ENCODE measurements at regions of chr6 and their contacts with region 1.

Region 1: DNA sequence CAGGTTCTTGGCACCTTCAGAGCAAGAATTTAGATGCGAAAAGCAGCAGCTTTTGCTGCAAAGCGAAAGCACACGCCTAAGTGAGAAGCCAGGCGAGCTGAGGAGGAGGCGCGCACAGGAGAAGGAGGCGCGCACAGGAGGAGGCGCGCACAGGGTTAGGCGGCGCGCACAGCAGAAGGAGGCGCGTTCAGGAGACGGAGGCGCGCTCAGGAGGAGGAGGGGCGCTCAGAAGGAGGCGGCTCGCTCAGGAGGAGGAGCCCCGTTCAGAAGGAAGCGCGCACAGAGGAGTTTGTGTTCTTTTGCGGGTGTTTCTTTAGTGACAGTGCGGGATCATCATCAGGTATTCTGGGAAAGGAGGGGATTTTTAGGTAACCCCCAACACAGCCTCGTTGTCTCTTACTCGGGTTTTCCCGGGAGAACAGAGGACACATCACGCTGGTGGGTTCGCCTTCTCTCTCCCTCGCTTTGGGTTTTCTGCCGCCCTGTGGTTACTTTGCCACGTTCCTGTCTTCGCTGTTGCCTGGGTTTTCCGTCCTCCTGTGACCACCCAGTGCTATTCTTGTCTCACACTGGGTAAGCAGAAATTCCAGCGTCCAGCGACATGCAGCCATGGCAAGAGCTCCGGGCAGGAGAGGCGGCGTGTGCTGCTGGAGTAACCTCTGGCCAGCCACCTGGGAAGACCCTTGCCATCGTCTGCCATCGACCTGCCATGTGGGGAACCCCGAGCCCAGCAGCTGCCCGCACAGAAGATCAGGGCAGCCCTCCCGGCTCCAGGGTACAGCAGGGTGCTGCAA is 47.0 kb downstream of the WDR27 start:
- DNase-seq: peak; percentile 83
- ATAC-seq: peak; percentile 95
- H3K4me3 Mint-ChIP-seq: peak overlapping the region; percentile 74
- H3K27ac Mint-ChIP-seq: peak overlapping the region; percentile 75
- H3K4me1 Mint-ChIP-seq: peaks cover 7% of the 10 kb centered on the region
- H3K27me3 Mint-ChIP-seq: no peaks in the 10 kb centered on the region

Region 2: DNA sequence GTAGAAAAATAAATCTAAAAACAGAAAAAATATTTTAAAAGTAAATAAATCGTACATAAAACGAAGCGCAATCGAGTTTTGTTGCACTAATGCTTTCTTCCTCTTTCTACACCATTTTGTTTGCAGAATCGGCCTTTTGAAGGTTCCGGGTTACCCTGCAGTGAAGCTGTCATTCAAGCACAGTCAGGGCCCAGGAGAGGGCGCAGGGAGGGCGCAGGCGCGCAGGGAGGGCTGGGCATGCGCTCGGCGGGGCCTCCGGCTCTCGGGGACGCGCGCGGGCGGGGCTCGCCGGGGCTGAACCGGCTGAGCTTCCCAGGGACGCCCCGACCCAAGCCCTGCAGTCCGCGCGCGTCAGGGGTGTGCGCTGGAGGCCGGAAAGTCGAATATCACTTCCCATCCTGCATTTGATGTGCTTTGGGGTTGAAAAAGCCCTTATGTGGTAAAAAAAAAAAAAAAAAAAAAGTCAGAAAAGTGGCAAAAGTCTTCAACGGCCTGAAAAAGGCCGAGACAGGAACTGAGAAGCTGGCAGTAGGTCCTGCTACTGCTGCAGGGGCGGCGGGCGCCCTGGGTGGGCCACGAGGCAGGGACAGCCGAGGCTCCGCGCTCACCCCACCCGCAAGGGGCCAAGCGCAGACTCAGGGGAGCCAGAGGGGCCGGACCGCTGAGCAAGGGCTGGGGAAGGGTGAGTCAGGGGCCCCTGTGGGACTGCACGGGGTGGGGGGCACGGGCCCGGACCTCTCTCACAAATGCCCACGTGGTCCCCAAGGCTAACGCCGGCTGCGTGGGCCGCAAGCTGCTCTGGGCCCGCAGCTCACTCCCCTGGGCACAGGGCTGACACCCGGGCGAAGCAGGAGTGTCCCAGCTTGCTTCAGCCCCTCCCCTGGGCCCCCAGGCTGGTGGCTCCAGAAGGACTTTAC is 441.6 kb before region 1 on chr6:
- CTCF ChIA-PET with region 1: no interaction called
- POLR2A ChIA-PET with region 1: no interaction called
- intact Hi-C with region 1: loop called in 1 of 2 experiments (anchors 2 kb)
- DNase-seq: peak; percentile 95
- ATAC-seq: peak; percentile 100
- H3K4me3 Mint-ChIP-seq: peak overlapping the region; percentile 54
- H3K27ac Mint-ChIP-seq: peak overlapping the region; percentile 59
- H3K4me1 Mint-ChIP-seq: peaks cover 16% of the 10 kb centered on the region
- H3K27me3 Mint-ChIP-seq: no peaks in the 10 kb centered on the region

Region 3: GRCh38 chr6:169669889-169670288 is 15.1 kb after region 1 on chr6:
- CTCF ChIA-PET with region 1: no interaction called
- POLR2A ChIA-PET with region 1: no interaction called
- intact Hi-C with region 1: no loop called
- DNase-seq: no peak
- ATAC-seq: peak; percentile 42
- H3K4me3 Mint-ChIP-seq: no peak overlapping the region
- H3K27ac Mint-ChIP-seq: peak overlapping the region; percentile 29
- H3K4me1 Mint-ChIP-seq: peaks cover 11% of the 10 kb centered on the region
- H3K27me3 Mint-ChIP-seq: no peaks in the 10 kb centered on the region